ENCODE measurements at regions of chr16 and their contacts with region 1.

Region 1: GRCh38 chr16:84186685-84187437 is at the start of gene TAF1C:
- DNase-seq: peak; percentile 88
- H3K4me3 ChIP-seq: peak within 1 kb of the TSS; percentile 93
- H3K27ac ChIP-seq: peak within 1 kb of the TSS; percentile 39
- H3K27me3 ChIP-seq: no peaks in the 10 kb centered on the region
- CTCF ChIP-seq: peak; percentile 95
- polyA plus RNA-seq, gene TAF1C: 14.2 and 15.2 TPM in 2 replicates

Region 2: GRCh38 chr16:84084570-84085270 is 102.1 kb before region 1 on chr16:
- CTCF ChIA-PET with region 1: interaction called, 23 read pairs
- POLR2A ChIA-PET with region 1: no interaction called
- DNase-seq: peak; percentile 10
- H3K4me3 ChIP-seq: no peak overlapping the region
- H3K27ac ChIP-seq: no peak overlapping the region
- H3K27me3 ChIP-seq: no peaks in the 10 kb centered on the region
- CTCF ChIP-seq: peak; percentile 84

Region 3: DNA sequence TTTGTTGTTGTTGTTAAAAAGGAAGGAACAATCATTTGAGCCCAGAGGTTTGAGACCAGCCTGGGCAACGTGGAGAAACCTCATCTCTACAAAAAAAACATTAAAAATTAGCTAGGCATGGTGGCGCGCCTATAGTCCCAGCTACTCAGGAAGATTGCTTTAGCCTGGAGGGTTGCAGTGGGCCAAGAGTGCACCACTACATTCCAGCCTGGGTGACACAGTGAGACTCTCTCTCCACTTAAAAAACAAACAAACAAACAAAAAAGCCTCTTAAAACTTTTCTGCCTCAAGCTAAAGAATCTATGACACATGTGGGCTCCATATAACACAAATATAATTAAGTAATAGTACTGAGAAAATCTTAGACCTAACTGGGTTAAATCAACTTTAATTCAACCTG is 82.6 kb before region 1 on chr16:
- CTCF ChIA-PET with region 1: interaction called, 12 read pairs
- POLR2A ChIA-PET with region 1: no interaction called
- DNase-seq: no peak
- H3K4me3 ChIP-seq: no peak overlapping the region
- H3K27ac ChIP-seq: no peak overlapping the region
- H3K27me3 ChIP-seq: no peaks in the 10 kb centered on the region
- CTCF ChIP-seq: no peak

Region 4: DNA sequence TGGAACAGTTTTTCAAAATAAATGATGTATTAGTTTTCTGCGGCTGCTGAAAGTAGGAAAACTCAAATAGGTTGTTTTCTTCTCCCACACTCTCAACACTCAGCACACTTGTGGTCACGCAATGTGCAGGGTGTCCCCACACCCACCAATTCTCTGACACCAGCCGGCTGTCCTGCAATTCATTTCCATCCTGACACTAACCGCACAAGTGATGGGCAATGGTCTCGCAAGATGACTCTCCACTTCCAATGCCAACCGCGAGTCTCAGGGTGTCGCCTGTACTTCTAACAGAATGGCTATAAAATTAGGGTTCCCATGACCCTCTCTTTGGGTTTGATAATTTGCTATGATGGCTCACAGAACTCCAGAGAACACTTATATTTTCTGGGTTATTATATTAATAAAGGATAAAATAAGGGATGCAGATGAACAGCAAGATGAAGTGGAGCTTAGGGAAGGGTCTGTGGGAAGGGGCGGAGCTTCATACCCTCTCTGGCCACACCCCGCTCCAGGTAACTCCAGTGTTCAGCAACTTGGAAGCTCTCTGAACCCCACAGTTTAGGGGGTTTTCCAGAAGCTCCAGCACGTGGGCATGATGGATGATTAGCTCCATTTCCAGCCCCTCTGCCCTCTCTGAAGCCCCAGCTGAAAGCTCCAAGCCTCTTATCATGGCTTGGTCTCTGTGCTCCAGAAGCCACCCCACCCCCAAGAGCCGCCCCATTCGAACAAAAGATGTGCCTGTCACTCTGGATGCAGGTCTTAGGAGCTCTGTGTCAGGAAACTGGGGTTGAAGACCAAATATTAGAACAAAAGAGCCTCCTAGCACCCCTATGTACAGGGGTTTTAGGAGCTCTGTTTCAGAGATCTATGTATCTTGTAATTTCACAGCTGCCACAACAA is 19.8 kb before region 1 on chr16:
- CTCF ChIA-PET with region 1: interaction called, 23 read pairs
- POLR2A ChIA-PET with region 1: no interaction called
- DNase-seq: no peak
- H3K4me3 ChIP-seq: no peak overlapping the region
- H3K27ac ChIP-seq: no peak overlapping the region
- H3K27me3 ChIP-seq: peaks cover 30% of the 10 kb centered on the region
- CTCF ChIP-seq: no peak

Region 5: DNA sequence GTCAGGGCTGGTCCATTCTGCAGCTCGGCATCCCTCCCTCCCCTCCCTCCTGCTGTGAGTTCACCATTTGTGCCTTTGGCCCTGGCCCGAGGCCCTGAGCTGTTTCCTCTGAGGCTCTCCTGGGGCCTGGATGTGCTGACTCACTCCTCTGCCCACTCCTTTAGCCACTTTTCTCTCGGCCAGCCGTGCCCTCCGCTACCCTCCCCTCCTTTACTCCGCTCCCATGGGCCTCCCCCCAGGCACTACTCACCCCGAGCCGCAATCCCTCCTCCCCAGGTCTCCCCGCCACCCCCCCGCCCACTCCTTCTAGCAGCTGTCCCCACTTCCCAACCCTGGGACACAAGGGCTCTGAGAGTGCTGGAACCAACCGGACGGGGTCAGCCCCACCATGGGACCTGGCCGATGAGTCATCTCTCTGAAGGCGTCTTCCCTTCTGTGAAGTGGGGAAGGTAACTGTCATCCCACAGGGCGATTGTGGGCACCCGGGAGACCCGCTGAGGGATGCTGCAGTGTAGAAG is 41.5 kb after region 1 on chr16:
- CTCF ChIA-PET with region 1: interaction called, 13 read pairs
- POLR2A ChIA-PET with region 1: no interaction called
- DNase-seq: peak; percentile 66
- H3K4me3 ChIP-seq: no peak overlapping the region
- H3K27ac ChIP-seq: peak overlapping the region; percentile 47
- H3K27me3 ChIP-seq: peaks cover 2% of the 10 kb centered on the region
- CTCF ChIP-seq: no peak

Region 6: DNA sequence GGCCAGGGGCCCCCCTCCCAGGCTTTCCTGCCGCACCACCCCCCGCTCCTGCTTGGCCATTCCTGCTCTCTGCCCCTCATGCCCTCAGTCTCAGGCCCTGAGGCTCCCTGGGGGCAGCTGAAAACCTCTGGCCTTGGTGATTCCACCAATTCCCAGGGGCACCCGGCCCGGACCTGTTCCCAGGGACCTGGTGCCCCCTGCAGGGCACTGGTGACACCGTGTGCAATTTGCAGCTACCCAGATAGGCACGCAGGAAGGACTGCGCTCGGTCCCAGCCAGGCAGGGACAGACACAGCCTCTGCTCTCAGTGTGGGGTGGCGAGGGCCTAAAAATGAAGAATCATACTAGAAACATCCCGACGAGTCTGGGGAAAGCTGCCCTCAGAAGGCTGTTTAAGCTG is 121.3 kb after region 1 on chr16:
- CTCF ChIA-PET with region 1: interaction called, 41 read pairs
- POLR2A ChIA-PET with region 1: no interaction called
- DNase-seq: peak; percentile 11
- H3K4me3 ChIP-seq: no peak overlapping the region
- H3K27ac ChIP-seq: no peak overlapping the region
- H3K27me3 ChIP-seq: peaks cover 8% of the 10 kb centered on the region
- CTCF ChIP-seq: peak; percentile 62

Region 7: DNA sequence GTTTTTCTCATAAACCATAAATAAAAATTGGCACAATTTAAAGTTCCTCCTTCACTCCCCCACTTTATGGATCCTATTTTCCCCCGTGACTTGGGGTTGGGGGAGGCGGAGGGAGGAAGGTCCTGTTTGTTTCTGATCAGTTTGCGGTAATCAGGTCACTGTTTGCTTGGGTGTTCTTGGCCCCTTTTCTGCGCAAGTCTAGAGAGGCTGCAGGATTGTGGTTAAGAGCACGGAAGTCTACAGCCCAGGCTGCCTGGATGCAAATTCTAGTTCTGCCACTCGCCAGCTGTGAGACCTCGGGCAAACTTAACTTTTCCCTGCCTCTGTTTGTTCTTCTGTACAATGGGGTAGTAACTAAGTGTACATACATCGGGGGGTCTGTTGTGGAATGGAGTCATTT is 193.5 kb after region 1 on chr16:
- CTCF ChIA-PET with region 1: no interaction called
- POLR2A ChIA-PET with region 1: no interaction called
- DNase-seq: no peak
- H3K4me3 ChIP-seq: no peak overlapping the region
- H3K27ac ChIP-seq: no peak overlapping the region
- H3K27me3 ChIP-seq: peaks cover 18% of the 10 kb centered on the region
- CTCF ChIP-seq: no peak

Measured in AG04450 (cell line).